GM18951 (cell line): ENCODE measurements at regions of chr16 and their contacts with region 1.

Region 1: DNA sequence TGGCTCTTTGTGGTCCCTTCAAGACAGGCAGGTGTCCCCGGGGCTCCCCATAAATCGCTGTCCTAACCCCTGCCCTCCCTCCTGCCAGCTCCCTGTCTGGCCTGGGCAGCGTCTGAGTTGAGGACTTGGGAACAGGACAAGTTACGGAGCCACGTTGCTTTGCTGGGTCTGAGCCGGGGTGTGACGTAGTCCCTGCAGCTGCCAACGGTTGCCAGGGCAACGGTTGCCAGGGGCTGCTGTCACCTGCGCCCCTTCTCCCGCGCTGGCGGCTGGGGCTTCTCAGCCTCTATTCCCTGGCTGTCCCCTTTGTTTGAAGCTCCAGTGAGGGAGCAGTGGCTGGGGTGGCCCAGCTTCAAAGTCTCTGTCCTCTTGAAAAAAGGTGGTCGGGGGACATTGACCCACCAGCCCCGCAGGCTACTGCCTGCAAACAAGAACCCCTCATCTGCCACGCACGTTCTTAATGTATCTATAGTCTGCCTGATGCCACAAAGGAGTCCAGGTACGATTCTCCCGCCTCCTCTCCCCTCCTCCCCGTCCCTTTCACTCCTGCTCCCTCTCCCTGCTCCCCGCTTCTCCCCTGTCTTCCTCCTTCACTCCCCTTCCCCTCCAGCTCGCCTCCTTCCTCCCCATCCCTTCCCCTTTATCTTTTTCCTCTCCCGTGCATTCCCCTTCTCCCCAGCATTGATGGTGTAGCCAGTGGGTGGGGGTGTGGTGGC is 10.9 kb downstream of the ADGRG1 start:
- POLR2A ChIP-seq: no peak

Region 2: GRCh38 chr16:57600048-57600835 is 39.1 kb before region 1 on chr16:
- in situ Hi-C with region 1: loop called (anchors 5 kb)
- POLR2A ChIP-seq: no peak

Region 3: GRCh38 chr16:58201163-58201562 is 561.8 kb after region 1 on chr16:
- in situ Hi-C with region 1: no loop called
- POLR2A ChIP-seq: no peak